B cell (primary cell): ENCODE measurements at regions of chr15 and their contacts with region 1.

Region 1: GRCh38 chr15:59174835-59175831 is 31.5 kb upstream of the LDHAL6B start:
- DNase-seq: peak; percentile 57
- ATAC-seq: peak; percentile 94
- H3K4me3 ChIP-seq: no peak overlapping the region
- H3K4me3 Mint-ChIP-seq: no peak overlapping the region
- H3K27ac ChIP-seq: no peak overlapping the region
- H3K27ac Mint-ChIP-seq: no peak overlapping the region
- H3K4me1 ChIP-seq: no peaks in the 10 kb centered on the region
- H3K4me1 Mint-ChIP-seq: peaks cover 7% of the 10 kb centered on the region
- H3K27me3 ChIP-seq: no peaks in the 10 kb centered on the region
- H3K27me3 Mint-ChIP-seq: no peaks in the 10 kb centered on the region
- CTCF ChIP-seq: peak; percentile 55

Region 2: DNA sequence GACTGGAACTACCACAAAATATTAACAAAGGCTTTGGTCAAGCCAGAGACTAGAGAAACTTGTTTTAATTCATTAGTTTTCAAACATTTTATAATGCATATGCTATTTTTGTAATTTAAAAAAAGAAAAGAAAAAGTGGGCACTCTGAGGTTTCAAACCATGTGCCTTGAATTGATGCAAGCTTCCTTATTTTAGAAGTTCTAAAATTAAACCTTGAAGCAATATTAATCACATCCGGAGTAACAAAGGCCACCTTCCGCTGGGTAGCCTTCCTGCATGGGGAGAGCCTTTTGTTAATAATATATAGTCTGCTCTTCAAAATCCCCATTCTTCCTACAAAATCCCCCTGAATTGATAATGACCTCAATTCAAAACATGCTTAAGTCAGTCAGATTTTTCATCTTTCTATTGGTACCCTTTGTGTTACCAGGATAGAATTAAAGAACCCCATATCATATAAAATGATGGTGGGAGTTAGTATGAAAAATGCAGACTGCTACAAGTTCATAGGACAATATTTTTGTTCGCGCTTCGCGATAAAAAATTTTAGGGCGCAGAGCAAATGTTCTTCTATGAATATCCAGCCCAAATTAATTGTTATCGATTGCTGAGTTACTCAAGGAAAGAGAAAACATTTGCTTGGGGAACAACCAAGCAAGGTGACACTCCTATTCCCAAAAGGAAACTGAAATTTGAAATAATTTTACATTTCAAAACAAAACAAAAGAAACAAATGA is 62.2 kb after region 1 on chr15:
- CTCF ChIA-PET with region 1: no interaction called
- POLR2A ChIA-PET with region 1: no interaction called
- intact Hi-C with region 1: loop called (anchors 5 kb)
- DNase-seq: peak; percentile 57
- ATAC-seq: peak; percentile 73
- H3K4me3 ChIP-seq: no peak overlapping the region
- H3K4me3 Mint-ChIP-seq: peak overlapping the region; percentile 60
- H3K27ac ChIP-seq: peak overlapping the region; percentile 33 to 81
- H3K27ac Mint-ChIP-seq: peak overlapping the region; percentile 53
- H3K4me1 ChIP-seq: peaks cover 20 to 23% of the 10 kb centered on the region in 2 donors
- H3K4me1 Mint-ChIP-seq: peaks cover 31% of the 10 kb centered on the region
- H3K27me3 ChIP-seq: no peaks in the 10 kb centered on the region
- H3K27me3 Mint-ChIP-seq: no peaks in the 10 kb centered on the region
- CTCF ChIP-seq: no peak